GM13976 (cell line): ENCODE measurements at regions of chr6 and their contacts with region 1.

Region 1: DNA sequence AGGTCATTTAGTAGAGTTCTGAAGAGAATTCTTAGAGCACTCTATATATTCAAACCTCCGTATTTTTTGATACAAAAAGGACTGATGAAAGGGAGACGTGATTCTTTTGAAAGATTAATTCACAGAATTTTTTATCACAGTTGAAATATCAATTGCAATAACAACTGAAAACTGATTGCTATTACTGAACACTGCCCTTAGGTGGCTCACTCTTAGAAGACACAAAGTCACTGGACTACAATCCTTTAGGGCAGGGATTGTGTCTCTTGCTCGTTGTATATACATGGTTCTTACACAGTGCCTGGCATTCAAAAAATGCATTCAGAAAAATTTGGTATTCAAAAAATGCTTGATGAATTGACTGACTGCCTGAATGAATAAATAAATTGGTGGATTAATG is 17.1 kb upstream of the CALHM6 start:
- DNase-seq: peak; percentile 41
- CTCF ChIP-seq: peak; percentile 58

Region 2: DNA sequence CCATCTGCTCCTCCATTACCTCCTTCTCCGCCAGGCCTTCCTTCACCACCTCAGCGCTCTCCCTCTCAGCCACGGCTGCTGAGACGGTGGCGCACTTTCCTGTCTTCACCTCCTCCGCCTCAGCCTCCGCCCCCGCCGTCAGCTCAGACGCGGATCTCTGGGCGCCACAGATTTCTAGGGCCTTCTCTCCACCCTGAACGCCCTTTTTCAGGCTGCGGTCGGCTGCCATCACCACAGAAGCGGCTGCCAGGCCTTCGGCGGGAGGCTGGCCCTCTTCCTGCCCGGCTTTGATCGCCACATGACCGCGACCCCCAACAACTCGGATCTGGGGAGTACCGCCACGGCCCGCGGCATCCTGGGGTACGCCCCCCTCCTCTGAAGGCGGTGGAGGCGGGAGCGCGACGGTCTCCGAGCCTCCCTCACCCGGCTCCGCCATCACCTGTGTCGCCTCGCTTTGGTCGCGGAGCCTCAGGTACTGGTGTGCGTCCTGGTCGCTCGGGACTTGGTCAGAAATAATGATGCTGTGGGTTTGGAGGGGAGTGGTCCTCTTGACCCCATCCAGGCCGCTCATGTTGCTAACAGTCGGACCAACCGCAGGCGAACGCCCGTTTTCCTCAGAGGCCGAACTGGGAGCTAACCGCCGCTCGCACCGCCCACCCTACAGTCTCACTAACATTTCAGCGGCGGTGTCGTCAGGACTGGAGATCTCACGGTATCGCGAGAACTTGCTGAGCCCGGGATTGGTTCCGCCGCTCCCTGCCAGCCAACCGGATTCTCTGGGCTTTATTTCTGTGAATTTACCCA is 164.6 kb before region 1 on chr6 and contains the start of gene TSPYL1:
- in situ Hi-C with region 1: loop called (anchors 25 kb)
- DNase-seq: peak; percentile 93
- CTCF ChIP-seq: peak; percentile 3

Region 3: GRCh38 chr6:117761610-117762009 is 1317.5 kb after region 1 on chr6:
- in situ Hi-C with region 1: no loop called
- DNase-seq: no peak
- CTCF ChIP-seq: no peak